Right ventricle myocardium inferior (tissue), 1 donor: ENCODE measurements at regions of chr4 and their contacts with region 1.

Region 1: DNA sequence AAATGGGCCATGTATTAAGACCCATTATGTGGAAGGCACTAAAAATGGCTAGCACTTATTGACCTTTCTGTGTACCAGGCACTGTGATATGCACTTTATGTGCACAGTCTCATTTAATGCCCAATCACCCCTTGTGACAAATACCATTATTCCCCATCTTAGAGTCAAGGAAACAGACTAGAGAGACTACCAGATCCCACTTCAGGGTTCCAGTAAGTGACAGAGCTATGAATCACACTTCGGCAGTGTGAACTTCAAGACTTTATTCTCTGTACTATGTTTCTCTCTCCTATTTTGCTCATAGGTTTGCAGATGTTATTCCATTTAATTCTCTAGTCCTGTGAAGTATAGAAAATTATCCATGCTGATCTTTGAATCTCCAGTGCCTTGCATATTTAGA is 107.0 kb downstream of the NFKB1 start:
- DNase-seq: no peak
- ATAC-seq: no peak

Region 2: DNA sequence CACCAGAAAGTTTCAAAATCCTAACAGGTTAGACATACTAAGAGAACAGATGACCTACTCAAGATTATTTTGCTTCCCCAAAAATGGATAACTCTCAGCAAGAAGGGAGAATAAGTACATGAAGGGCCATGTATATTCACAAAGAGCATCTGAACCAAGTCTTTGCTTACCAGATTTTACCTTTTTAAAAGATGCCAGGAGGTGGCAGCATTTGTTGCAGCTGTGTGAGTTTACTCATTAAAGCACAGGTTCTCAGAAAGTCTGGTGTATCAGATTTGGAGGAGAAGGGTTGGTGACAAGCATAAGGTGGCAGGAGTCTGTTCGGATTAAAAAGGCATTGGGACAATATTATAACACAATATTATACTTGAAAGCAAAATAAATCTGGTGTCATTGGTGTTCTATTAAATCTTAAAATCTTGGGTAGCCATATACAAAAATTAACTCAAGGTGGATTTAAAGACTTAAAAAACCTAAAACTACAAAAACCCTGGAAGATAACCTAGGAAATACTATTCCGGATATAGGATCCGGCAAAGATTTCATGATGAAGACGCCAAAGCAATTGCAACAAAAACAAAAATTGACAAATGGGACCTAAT is 158.3 kb before region 1 on chr4:
- intact Hi-C with region 1: loop called (anchors 5 kb)
- DNase-seq: no peak
- ATAC-seq: peak; percentile 60

Region 3: GRCh38 chr4:102637391-102637790 is 29.2 kb after region 1 on chr4:
- intact Hi-C with region 1: no loop called
- DNase-seq: no peak
- ATAC-seq: no peak